ENCODE measurements at regions of chr7 and their contacts with region 1.

Region 1: DNA sequence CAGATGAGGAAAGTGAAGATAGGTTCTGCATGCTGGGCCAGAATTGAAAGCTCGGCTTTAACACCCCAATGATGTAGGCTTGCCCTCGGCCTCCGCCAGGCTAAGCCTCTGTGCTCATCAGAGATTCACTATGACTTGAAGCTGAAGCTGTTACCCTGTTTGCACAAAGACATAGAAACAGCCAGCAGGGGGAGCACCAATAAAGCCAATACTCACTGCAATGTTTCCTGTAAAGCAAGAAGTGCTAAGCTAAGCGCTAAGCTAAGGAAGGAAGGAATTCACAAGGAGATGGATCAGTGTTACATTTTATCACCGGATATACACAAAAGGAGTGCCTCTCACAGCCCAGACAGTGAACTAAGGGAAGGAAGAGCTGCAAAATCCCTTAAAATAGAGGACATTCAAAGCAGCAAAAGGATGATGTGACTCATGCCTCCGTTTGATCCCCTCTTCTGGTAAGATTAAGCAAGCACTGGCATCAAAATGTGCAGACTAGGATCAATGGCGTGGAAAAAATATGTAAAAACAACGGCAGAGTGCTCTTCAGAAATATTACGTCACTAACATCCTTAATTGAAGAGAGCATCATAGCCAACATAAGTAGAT is 153.8 kb downstream of the COBL start:
- DNase-seq: peak; percentile 16 to 56 (median 35)
- H3K4me3 ChIP-seq: no peak overlapping the region
- H3K4me3 Mint-ChIP-seq: no peak overlapping the region
- H3K27ac ChIP-seq: no peak overlapping the region
- H3K27ac Mint-ChIP-seq: no peak overlapping the region
- H3K4me1 ChIP-seq: no peaks in the 10 kb centered on the region
- H3K4me1 Mint-ChIP-seq: peaks cover 0 to 5% (median 1%) of the 10 kb centered on the region in 3 donors
- H3K27me3 ChIP-seq: no peaks in the 10 kb centered on the region
- H3K27me3 Mint-ChIP-seq: peaks cover 5 to 27% of the 10 kb centered on the region in 2 donors

Region 2: GRCh38 chr7:51080622-51081269 is 82.1 kb before region 1 on chr7:
- CTCF ChIA-PET with region 1: no interaction called
- POLR2A ChIA-PET with region 1: no interaction called
- DNase-seq: no peak
- H3K4me3 ChIP-seq: no peak overlapping the region
- H3K4me3 Mint-ChIP-seq: no peak overlapping the region
- H3K27ac ChIP-seq: no peak overlapping the region
- H3K27ac Mint-ChIP-seq: no peak overlapping the region
- H3K4me1 ChIP-seq: no peaks in the 10 kb centered on the region
- H3K4me1 Mint-ChIP-seq: no peaks in the 10 kb centered on the region
- H3K27me3 ChIP-seq: no peaks in the 10 kb centered on the region
- H3K27me3 Mint-ChIP-seq: no peaks in the 10 kb centered on the region

Region 3: GRCh38 chr7:51175316-51175991 is 12.6 kb after region 1 on chr7:
- CTCF ChIA-PET with region 1: interaction called, 10 read pairs
- POLR2A ChIA-PET with region 1: no interaction called
- DNase-seq: no peak
- H3K4me3 ChIP-seq: no peak overlapping the region
- H3K4me3 Mint-ChIP-seq: no peak overlapping the region
- H3K27ac ChIP-seq: no peak overlapping the region
- H3K27ac Mint-ChIP-seq: no peak overlapping the region
- H3K4me1 ChIP-seq: no peaks in the 10 kb centered on the region
- H3K4me1 Mint-ChIP-seq: no peaks in the 10 kb centered on the region
- H3K27me3 ChIP-seq: no peaks in the 10 kb centered on the region
- H3K27me3 Mint-ChIP-seq: peaks cover 3 to 26% of the 10 kb centered on the region in 2 donors